A673 (cell line): ENCODE measurements at regions of chr22 and their contacts with region 1.

Region 1: DNA sequence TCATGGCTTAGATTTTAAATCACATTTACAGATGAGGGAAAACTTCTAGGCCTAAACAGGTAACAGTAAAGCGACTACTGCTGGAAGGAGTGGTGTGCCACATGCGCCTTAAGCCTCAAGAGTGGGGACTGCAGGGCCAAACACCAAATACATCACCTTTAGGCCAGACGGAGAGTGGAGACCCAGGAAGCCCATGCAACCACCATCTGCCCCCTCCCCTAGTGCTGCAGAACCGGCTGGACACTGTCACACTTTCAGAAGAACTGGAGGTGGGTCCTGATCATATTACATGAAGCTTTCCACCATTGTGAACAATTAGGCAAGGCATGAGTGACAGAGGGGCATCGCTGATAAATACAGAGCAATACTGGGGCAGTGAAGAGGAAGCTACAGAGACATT is 28.9 kb downstream of the SLC25A18 start:
- DNase-seq: no peak
- H3K4me3 ChIP-seq: no peak overlapping the region
- H3K27ac ChIP-seq: no peak overlapping the region
- H3K4me1 ChIP-seq: no peaks in the 10 kb centered on the region
- H3K27me3 ChIP-seq: no peaks in the 10 kb centered on the region
- CTCF ChIP-seq: no peak

Region 2: DNA sequence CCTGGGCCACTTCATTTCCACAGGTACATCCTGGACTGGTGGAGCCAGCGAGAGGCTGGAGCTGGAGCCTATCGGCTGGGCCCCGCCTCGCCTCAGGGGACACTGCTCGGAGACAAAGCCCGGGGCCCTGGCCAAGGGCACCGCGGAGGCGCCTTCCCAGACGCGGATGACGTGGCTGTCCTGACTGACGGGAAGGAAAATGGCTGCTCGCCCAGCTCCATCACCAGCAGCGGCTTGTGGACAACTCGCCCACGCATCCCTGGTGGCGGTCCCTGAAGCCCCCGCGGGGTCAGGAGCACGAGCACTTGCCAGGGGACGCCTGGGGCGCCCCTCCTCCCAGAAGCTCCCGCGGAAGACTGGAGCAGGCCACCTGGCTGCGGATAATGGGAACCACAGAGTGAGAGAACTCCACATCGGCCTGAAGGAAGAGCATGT is 173.3 kb before region 1 on chr22:
- CTCF ChIA-PET with region 1: no interaction called
- POLR2A ChIA-PET with region 1: interaction called, 11 read pairs
- intact Hi-C with region 1: no loop called
- DNase-seq: no peak
- H3K4me3 ChIP-seq: no peak overlapping the region
- H3K27ac ChIP-seq: no peak overlapping the region
- H3K4me1 ChIP-seq: no peaks in the 10 kb centered on the region
- H3K27me3 ChIP-seq: no peaks in the 10 kb centered on the region
- CTCF ChIP-seq: no peak

Region 3: GRCh38 chr22:17443405-17444203 is 148.6 kb before region 1 on chr22:
- CTCF ChIA-PET with region 1: no interaction called
- POLR2A ChIA-PET with region 1: no interaction called
- intact Hi-C with region 1: no loop called
- DNase-seq: peak; percentile 49
- H3K4me3 ChIP-seq: no peak overlapping the region
- H3K27ac ChIP-seq: peak overlapping the region; percentile 12
- H3K4me1 ChIP-seq: peaks cover 8% of the 10 kb centered on the region
- H3K27me3 ChIP-seq: no peaks in the 10 kb centered on the region
- CTCF ChIP-seq: no peak